Adrenal gland (tissue), 19 donors: ENCODE measurements at regions of chr20 and their contacts with region 1.

Region 1: DNA sequence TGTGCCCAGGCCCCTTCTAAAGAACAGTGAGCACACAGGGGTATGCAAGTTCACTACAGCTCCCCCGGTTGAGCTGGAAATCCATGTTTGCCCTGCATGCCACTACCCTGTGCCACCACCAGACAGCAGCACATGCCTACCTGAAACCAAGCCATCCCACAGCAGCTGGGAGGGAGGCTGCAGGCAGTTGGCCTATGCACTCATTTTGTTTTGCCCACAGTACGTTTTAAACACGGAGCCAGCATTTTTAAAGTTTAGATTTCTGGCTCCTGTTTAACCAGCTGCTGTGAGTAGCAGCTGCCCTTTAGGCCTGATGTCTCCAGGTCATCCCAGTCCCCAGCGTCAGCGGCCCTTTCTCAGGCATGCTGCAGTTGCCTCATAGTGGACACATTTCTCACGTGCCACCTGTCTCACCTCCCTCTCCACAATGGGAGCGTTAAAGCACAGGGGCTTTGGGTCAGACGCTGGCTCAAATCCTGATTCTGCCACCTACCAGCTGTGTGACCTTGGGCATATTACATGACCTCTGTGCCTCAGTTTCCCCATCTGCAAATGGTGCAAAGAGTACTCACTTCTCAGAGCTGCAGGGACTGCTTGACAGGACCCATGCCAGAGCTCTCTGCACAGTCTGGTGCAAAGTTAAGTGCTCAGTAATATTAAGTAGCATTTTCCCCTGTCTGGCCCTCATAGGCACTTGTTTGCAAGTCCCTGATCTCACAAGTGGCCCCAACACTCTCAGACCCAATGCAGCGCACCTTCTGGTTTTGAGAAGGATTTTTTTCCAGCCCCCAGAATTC is 8.1 kb upstream of the UBE2V1 start:
- DNase-seq: peak; percentile 73 to 90 (median 84)
- H3K4me3 ChIP-seq: no peak overlapping the region
- H3K27ac ChIP-seq: peak overlapping the region in 3 of 5 donors; percentile 45 to 62 (median 60)
- H3K4me1 ChIP-seq: peaks cover 3 to 8% of the 10 kb centered on the region in 2 donors
- H3K27me3 ChIP-seq: no peaks in the 10 kb centered on the region
- CTCF ChIP-seq: peak; percentile 78 to 98 (median 98)
- POLR2A ChIP-seq: no peak

Region 2: DNA sequence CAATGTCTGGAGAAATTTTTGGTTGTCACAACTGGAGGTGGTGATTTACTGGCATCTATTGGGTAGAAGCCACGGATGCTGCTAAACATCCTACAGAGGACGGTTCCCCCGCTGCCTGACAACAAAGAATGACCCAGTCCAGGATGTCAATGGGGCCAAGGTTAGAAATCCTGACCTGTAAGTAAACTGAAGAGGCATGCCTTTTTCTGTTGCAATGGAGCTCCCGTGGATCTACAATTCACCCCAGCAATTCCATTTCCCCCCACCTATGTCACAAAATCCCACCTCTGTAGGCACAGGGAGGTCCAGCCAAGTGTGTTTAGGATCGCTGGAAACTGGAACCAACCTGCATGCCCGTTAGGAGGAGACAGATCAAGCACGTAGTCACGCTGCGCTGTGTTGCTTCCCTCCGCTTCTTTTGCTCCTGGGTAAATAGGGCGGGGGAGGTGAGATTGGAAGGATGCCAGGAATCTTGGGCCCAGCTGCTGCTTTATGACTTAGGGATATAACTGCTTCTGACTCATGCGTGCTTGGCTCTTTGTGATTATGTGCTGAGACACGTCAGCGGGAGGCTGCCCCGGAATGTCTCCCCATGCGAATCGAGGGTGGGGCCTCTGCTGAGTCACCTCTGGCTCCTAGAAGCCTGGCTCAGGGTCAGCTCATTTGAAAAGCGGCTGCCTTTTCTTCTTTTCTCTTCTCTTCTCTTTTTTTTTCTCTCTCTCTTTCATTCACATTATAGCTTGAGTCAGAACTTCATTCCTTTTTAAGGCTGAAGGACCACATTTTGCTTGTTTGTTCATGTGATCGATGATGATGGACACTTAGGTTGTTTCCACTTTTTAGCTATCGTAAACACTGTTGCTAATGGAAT is 44.8 kb after region 1 on chr20:
- intact Hi-C with region 1: loop called (anchors 5 kb)
- DNase-seq: peak; percentile 97 to 100 (median 99)
- H3K4me3 ChIP-seq: peak overlapping the region in 2 of 4 donors; percentile 0 to 51
- H3K27ac ChIP-seq: peak overlapping the region; percentile 69 to 99 (median 94)
- H3K4me1 ChIP-seq: peaks cover 7 to 13% of the 10 kb centered on the region in 2 donors
- H3K27me3 ChIP-seq: no peaks in the 10 kb centered on the region
- CTCF ChIP-seq: no peak
- POLR2A ChIP-seq: peak in 1 of 2 donors; percentile 90

Region 3: GRCh38 chr20:50172347-50173013 is 51.4 kb after region 1 on chr20:
- intact Hi-C with region 1: loop called (anchors 5 kb)
- DNase-seq: peak; percentile 87 to 95 (median 92)
- H3K4me3 ChIP-seq: peak overlapping the region in 3 of 4 donors; percentile 33 to 68 (median 60)
- H3K27ac ChIP-seq: peak overlapping the region; percentile 70 to 93 (median 87)
- H3K4me1 ChIP-seq: peaks cover 3 to 16% of the 10 kb centered on the region in 2 donors
- H3K27me3 ChIP-seq: no peaks in the 10 kb centered on the region
- CTCF ChIP-seq: no peak
- POLR2A ChIP-seq: peak; percentile 70 to 93

Region 4: GRCh38 chr20:50308513-50309279 is 187.6 kb after region 1 on chr20:
- intact Hi-C with region 1: no loop called
- DNase-seq: peak; percentile 89 to 98 (median 97)
- H3K4me3 ChIP-seq: peak overlapping the region in 1 of 4 donors; percentile 7
- H3K27ac ChIP-seq: peak overlapping the region; percentile 89 to 98 (median 97)
- H3K4me1 ChIP-seq: peaks cover 49 to 59% of the 10 kb centered on the region in 2 donors
- H3K27me3 ChIP-seq: no peaks in the 10 kb centered on the region
- CTCF ChIP-seq: peak in 2 of 6 experiments; percentile 14 to 23
- POLR2A ChIP-seq: peak; percentile 45 to 51